ENCODE measurements at regions of chr21 and their contacts with region 1.

Region 1: DNA sequence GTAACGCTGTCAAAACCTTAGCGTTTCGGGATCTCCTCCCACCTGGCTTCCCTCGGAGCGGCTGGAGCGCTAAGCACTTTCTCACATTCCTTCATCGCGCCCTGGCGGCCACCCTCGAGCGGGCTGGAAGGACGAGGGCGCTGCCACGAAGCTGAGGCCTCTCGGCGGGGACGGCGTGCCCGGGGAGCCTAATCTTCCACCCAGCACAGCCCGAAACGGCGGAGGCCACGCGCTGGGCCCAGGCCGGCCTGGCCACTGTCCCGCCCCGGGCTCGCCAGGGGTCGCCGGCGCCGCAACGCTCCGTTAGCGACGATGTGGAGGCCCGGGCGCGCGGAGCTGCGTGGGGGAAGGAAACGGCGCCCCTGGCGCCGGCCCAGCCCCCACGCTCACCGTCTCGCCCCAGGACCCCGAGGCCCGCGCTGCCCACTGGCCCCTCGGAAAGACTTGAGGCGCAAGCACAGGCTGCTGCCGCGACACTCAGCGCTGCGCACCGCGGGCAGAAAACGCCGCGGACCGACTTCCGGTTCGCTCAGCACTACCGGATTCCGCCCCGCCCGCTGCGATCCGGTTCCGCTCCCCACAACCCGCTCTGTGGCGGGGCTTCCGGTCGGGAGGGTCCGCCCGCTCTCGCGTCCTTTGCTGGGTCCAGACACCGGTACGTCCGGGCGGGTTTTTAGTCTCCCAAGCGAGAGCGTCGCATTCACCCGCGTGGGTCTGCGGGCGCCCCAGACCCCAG is at the start of gene YBEY:
- DNase-seq: peak; percentile 91
- ATAC-seq: peak; percentile 83
- H3K4me3 ChIP-seq: peak within 1 kb of the TSS; percentile 68 to 86 (median 78)
- H3K4me3 Mint-ChIP-seq: peak within 1 kb of the TSS; percentile 93
- H3K27ac ChIP-seq: peak within 1 kb of the TSS; percentile 61 to 87
- H3K27ac Mint-ChIP-seq: peak within 1 kb of the TSS; percentile 92
- H3K4me1 ChIP-seq: peaks cover 29 to 52% of the 10 kb centered on the region in 2 donors
- H3K4me1 Mint-ChIP-seq: peaks cover 48% of the 10 kb centered on the region
- H3K27me3 ChIP-seq: no peaks in the 10 kb centered on the region
- H3K27me3 Mint-ChIP-seq: no peaks in the 10 kb centered on the region
- CTCF ChIP-seq: peak; percentile 55
- total RNA-seq, gene YBEY: 15.0 and 18.1 TPM in 2 replicates

Region 2: DNA sequence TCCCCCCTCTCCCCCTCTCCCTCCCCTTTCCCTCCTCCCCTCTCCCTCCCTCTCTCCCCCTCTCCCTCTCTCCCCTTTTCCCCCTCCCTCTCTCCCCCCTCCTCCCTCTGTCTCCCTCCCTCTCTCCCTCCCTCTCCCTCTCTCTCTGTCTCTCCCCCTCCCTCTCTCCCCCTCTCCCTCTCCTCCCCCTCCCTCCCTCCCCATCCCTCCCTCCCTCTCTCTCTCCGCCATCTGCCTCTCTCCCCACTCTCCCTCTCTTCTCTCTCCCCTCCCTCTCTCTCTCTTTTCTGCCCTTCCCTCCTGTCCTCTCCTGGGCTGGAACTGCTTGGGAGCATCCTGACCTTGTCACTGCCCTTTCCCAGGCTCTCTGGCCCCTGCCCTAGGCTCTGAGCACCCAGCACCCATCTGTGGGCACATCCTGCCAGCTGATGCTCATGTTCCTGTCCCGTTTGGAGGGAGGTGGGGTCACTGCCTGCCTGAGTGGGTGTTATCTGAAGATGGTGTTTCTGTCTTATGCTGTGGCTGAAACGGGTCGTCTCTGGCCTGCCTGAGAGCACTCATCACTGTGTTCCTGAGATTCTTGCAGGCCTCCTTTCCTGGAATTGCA is 141.4 kb before region 1 on chr21:
- CTCF ChIA-PET with region 1: interaction called, 17 read pairs
- POLR2A ChIA-PET with region 1: no interaction called
- intact Hi-C with region 1: no loop called
- DNase-seq: no peak
- ATAC-seq: no peak
- H3K4me3 ChIP-seq: no peak overlapping the region
- H3K4me3 Mint-ChIP-seq: peak overlapping the region; percentile 26
- H3K27ac ChIP-seq: no peak overlapping the region
- H3K27ac Mint-ChIP-seq: peak overlapping the region; percentile 59
- H3K4me1 ChIP-seq: peaks cover 0 to 5% of the 10 kb centered on the region in 2 donors
- H3K4me1 Mint-ChIP-seq: peaks cover 8% of the 10 kb centered on the region
- H3K27me3 ChIP-seq: no peaks in the 10 kb centered on the region
- H3K27me3 Mint-ChIP-seq: no peaks in the 10 kb centered on the region
- CTCF ChIP-seq: no peak

Region 3: DNA sequence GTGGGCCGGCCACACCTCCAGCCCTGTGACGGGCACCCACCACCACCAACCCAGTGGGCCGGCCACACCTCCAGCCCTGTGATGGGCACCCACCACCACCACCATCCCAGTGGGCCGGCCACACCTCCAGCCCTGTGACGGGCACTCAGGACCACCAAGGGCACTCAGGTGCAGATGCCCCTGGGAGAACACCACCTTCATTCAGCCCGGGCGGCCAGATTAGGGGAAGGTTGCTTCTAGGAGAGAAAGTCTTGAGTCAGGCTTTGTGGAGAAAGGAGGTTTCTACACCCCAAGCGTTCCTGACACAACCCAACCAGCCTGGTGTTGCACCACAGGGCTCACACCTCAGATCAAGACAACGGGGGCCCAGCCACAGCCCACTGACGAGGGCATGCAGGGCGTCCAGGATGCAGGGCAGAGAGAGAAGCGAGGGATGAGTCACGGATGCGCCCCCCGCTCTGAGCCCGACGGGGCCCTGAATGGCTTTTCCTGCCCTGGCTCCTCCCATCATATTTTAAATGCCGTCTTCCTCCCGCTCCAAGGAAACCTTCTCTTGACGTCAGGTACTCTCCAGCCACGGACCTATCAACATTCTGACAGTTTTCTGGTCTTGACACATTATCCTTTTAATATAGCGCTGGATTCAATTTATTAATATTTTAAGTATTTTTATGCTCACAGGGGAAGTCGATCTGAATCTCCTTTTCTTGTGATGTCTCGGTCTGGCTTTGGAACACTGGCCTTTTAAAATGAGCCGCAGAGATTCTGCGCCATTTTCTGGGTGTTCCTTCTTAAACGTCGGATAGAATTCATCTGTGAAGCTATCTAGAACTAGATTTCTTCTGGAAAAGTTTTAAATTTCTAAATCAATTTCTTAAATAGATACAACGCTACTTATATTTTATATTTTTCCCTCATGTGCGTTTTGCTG is 101.0 kb before region 1 on chr21:
- CTCF ChIA-PET with region 1: no interaction called
- POLR2A ChIA-PET with region 1: no interaction called
- intact Hi-C with region 1: loop called (anchors 1 kb)
- DNase-seq: peak; percentile 91
- ATAC-seq: peak; percentile 84
- H3K4me3 ChIP-seq: peak overlapping the region; percentile 36 to 91 (median 76)
- H3K4me3 Mint-ChIP-seq: peak overlapping the region; percentile 92
- H3K27ac ChIP-seq: peak overlapping the region; percentile 59 to 63
- H3K27ac Mint-ChIP-seq: peak overlapping the region; percentile 90
- H3K4me1 ChIP-seq: peaks cover 0 to 16% of the 10 kb centered on the region in 2 donors
- H3K4me1 Mint-ChIP-seq: peaks cover 9% of the 10 kb centered on the region
- H3K27me3 ChIP-seq: no peaks in the 10 kb centered on the region
- H3K27me3 Mint-ChIP-seq: no peaks in the 10 kb centered on the region
- CTCF ChIP-seq: no peak

Region 4: DNA sequence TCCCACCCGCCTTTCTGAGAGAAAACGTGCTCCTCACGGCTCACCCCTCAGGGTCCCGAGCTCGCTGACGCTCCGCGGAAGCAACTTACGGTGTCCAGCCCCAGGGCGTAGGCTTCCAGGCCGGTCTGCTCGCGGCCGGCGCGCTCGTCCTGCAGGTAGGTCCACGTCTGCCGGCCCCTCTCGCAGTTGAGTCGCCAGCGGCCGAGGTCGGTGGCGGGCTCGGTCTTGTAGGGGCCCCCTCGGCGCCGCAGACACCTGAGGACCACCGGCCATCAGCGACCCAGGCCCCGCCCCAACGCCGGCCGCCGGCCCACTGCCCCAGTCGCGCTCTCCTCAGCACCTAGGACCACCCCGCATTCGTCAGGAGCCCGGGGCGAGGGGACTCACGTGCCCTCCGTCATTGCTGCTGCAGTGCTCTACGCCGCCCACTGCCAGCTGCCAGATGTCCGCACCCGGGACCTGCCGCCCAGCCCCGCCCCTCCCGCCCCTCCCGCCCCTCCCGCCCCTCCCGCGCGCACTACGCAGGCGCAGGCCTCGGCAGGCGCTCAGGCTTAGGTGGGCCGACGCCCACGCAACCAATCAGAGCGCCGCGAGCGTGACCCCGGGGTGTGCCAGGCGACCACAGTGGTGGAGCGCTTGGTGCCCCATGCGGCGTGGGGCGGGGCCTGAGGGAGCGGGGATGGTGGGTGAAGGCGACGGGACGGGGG is 57.4 kb before region 1 on chr21 and contains the start of gene LSS:
- CTCF ChIA-PET with region 1: interaction called, 4 read pairs
- POLR2A ChIA-PET with region 1: no interaction called
- intact Hi-C with region 1: loop called (anchors 1 kb)
- DNase-seq: peak; percentile 99
- ATAC-seq: peak; percentile 94
- H3K4me3 ChIP-seq: peak within 1 kb of the TSS; percentile 13 to 92 (median 87)
- H3K4me3 Mint-ChIP-seq: peak within 1 kb of the TSS; percentile 90
- H3K27ac ChIP-seq: peak within 1 kb of the TSS; percentile 71 to 91
- H3K27ac Mint-ChIP-seq: peak within 1 kb of the TSS; percentile 91
- H3K4me1 ChIP-seq: peaks cover 21 to 22% of the 10 kb centered on the region in 2 donors
- H3K4me1 Mint-ChIP-seq: peaks cover 35% of the 10 kb centered on the region
- H3K27me3 ChIP-seq: no peaks in the 10 kb centered on the region
- H3K27me3 Mint-ChIP-seq: no peaks in the 10 kb centered on the region
- CTCF ChIP-seq: no peak
- total RNA-seq, gene LSS: 58.1 and 68.0 TPM in 2 replicates

Region 5: DNA sequence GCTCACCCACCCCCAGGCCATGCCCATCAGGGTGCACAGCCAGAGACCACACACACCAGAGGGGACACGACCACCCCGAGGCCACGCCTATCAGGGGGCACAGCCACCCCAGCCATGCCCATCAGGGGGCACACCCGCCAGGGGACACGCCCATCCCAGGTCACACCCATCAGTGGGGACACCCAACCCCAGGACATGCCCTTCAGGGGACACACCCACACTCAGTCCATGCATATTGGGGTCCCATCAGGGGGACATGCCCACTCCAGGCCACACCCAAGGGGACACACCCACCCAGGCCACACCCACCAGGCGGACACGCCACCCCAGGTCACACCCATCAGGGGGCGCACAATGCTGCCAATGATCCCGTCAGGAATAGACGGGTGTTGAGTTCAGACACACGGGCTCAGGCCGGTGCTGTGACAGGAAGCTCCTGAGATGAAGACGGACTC is 21.2 kb before region 1 on chr21:
- CTCF ChIA-PET with region 1: no interaction called
- POLR2A ChIA-PET with region 1: no interaction called
- intact Hi-C with region 1: no loop called
- DNase-seq: no peak
- ATAC-seq: no peak
- H3K4me3 ChIP-seq: no peak overlapping the region
- H3K4me3 Mint-ChIP-seq: no peak overlapping the region
- H3K27ac ChIP-seq: no peak overlapping the region
- H3K27ac Mint-ChIP-seq: no peak overlapping the region
- H3K4me1 ChIP-seq: no peaks in the 10 kb centered on the region
- H3K4me1 Mint-ChIP-seq: no peaks in the 10 kb centered on the region
- H3K27me3 ChIP-seq: no peaks in the 10 kb centered on the region
- H3K27me3 Mint-ChIP-seq: no peaks in the 10 kb centered on the region
- CTCF ChIP-seq: no peak

Region 6: GRCh38 chr21:46295996-46296752 is 10.2 kb after region 1 on chr21:
- CTCF ChIA-PET with region 1: no interaction called
- POLR2A ChIA-PET with region 1: interaction called, 3 read pairs
- intact Hi-C with region 1: loop called (anchors 1 kb)
- DNase-seq: peak; percentile 64
- ATAC-seq: peak; percentile 89
- H3K4me3 ChIP-seq: peak overlapping the region in 3 of 5 experiments; percentile 18 to 49 (median 29)
- H3K4me3 Mint-ChIP-seq: peak overlapping the region; percentile 85
- H3K27ac ChIP-seq: peak overlapping the region; percentile 34 to 67
- H3K27ac Mint-ChIP-seq: peak overlapping the region; percentile 77
- H3K4me1 ChIP-seq: peaks cover 11 to 17% of the 10 kb centered on the region in 2 donors
- H3K4me1 Mint-ChIP-seq: peaks cover 13% of the 10 kb centered on the region
- H3K27me3 ChIP-seq: peaks cover 0 to 10% (median 3%) of the 10 kb centered on the region in 4 experiments
- H3K27me3 Mint-ChIP-seq: peaks cover 3% of the 10 kb centered on the region
- CTCF ChIP-seq: no peak

Region 7: DNA sequence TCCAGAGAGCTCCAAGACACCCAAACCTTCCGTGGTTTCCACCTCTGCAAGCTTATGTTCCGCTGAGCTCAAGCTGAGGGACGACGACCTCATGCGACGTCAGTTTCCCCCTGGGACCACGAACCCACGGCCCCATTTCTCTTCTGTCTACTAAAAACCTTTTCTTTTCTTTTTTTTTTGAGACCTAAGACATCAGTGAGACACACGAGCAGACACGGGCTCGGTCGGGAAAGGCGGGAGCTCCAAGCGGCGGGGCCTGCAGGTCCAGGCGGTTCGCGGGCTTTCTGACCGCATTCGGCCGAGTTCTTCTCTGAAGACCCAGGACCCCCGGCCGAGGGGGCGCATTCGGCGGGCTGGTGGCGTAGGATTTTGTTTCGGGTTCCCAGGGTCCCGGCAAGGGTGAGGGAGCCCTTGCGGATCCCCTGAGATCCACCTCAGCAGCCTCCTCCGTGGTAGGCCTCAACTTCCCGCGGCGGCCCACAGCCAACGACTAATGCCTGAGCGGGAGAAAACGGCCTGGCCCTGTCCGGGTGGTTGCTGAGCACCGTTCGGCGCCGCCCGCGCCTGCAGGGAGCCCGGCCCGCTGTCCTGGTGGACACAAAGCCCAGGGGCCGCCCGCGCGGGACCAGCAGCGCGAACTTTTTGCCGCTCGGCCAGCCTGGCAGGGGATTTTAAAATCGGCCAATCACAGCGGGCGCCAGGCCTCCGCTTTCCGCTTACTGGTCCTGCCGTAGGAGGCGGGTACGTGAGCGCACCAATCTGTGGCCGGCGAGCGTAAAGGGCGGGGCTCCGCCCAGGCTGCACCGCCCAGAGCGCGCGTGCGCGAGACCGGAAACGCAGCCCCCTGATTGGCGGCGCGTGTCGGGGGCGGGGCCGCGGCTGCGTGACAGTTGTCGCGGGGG is 37.5 kb after region 1 on chr21 and contains the start of gene C21orf58:
- CTCF ChIA-PET with region 1: interaction called, 5 read pairs
- POLR2A ChIA-PET with region 1: no interaction called
- intact Hi-C with region 1: loop called (anchors 1 kb)
- DNase-seq: peak; percentile 98
- ATAC-seq: peak; percentile 80
- H3K4me3 ChIP-seq: peak within 1 kb of the TSS; percentile 54 to 100 (median 95)
- H3K4me3 Mint-ChIP-seq: peak within 1 kb of the TSS; percentile 88
- H3K27ac ChIP-seq: peak within 1 kb of the TSS; percentile 95 to 96
- H3K27ac Mint-ChIP-seq: peak within 1 kb of the TSS; percentile 95
- H3K4me1 ChIP-seq: peaks cover 16 to 23% of the 10 kb centered on the region in 2 donors
- H3K4me1 Mint-ChIP-seq: peaks cover 24% of the 10 kb centered on the region
- H3K27me3 ChIP-seq: peaks cover 0 to 3% (median 0%) of the 10 kb centered on the region in 4 experiments
- H3K27me3 Mint-ChIP-seq: no peaks in the 10 kb centered on the region
- CTCF ChIP-seq: no peak
- total RNA-seq, gene C21orf58: 9.3 and 9.5 TPM in 2 replicates

Region 8: GRCh38 chr21:46458315-46459023 is 172.5 kb after region 1 on chr21 and contains the start of gene DIP2A:
- CTCF ChIA-PET with region 1: no interaction called
- POLR2A ChIA-PET with region 1: no interaction called
- intact Hi-C with region 1: loop called (anchors 1 kb)
- DNase-seq: peak; percentile 97
- ATAC-seq: peak; percentile 98
- H3K4me3 ChIP-seq: peak within 1 kb of the TSS; percentile 49 to 95 (median 90)
- H3K4me3 Mint-ChIP-seq: peak within 1 kb of the TSS; percentile 93
- H3K27ac ChIP-seq: peak within 1 kb of the TSS; percentile 79 to 89
- H3K27ac Mint-ChIP-seq: peak within 1 kb of the TSS; percentile 89
- H3K4me1 ChIP-seq: peaks cover 16 to 23% of the 10 kb centered on the region in 2 donors
- H3K4me1 Mint-ChIP-seq: peaks cover 29% of the 10 kb centered on the region
- H3K27me3 ChIP-seq: no peaks in the 10 kb centered on the region
- H3K27me3 Mint-ChIP-seq: no peaks in the 10 kb centered on the region
- CTCF ChIP-seq: no peak
- total RNA-seq, gene DIP2A: 59.0 and 61.9 TPM in 2 replicates